OCI-LY7 (cell line): ENCODE measurements at regions of chr4 and their contacts with region 1.

Region 1: DNA sequence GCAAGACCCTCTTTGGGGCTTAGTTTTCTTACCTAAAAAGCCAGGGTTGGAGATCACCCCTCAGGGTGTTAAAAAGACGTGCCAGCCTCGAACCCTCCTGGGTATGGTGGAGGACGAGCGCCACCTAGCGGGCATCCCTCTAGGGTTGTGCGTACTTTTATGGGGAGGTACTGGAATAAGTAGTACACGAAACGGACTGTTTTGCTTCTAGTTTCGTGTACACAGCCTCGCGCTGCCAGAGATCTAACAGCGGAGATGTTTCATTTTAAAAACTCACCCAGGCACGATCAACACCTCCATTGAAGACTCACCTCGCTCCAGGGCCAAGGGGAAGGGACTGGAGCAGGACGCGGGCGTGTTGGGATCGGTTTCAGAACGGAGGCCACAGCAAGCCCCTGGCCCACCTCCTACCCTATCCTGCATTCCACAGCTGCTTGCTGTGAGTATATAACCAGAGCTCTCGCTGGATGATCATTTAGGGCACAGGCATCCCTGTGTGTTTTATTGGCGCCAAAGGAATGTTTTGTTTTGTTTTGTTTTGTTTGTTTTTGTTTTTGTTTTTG is 4.8 kb upstream of the NKX3-2 start:
- DNase-seq: peak; percentile 87
- H3K4me3 ChIP-seq: peak overlapping the region; percentile 59
- H3K27ac ChIP-seq: no peak overlapping the region
- H3K4me1 ChIP-seq: peaks cover 16% of the 10 kb centered on the region
- CTCF ChIP-seq: peak; percentile 94

Region 2: DNA sequence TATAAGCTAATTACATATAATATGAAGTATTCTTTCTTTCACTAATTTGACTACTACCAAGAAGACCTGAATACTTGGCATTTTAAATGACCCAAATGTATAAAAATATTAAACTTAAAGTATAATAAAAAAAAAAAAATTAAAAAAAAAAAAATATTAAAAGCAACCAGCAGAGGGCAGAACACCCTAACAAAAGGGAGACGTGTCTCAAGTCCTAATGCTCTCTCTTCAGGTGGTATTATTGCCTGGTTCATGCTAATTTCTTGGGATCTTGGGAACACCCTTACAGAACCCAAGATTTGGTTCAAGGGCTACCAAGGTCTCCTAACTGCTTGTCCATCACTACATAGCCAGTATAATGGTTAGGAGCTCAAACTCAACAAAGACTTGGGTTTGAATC is 819.7 kb before region 1 on chr4:
- CTCF ChIA-PET with region 1: no interaction called
- POLR2A ChIA-PET with region 1: no interaction called
- intact Hi-C with region 1: loop called (anchors 1 kb)
- DNase-seq: peak; percentile 39
- H3K4me3 ChIP-seq: no peak overlapping the region
- H3K27ac ChIP-seq: no peak overlapping the region
- H3K4me1 ChIP-seq: peaks cover 2% of the 10 kb centered on the region
- CTCF ChIP-seq: peak; percentile 75

Region 3: GRCh38 chr4:12844141-12844540 is 704.9 kb before region 1 on chr4:
- CTCF ChIA-PET with region 1: no interaction called
- POLR2A ChIA-PET with region 1: no interaction called
- intact Hi-C with region 1: loop called (anchors 2 kb)
- DNase-seq: no peak
- H3K4me3 ChIP-seq: no peak overlapping the region
- H3K27ac ChIP-seq: no peak overlapping the region
- H3K4me1 ChIP-seq: no peaks in the 10 kb centered on the region
- CTCF ChIP-seq: no peak

Region 4: GRCh38 chr4:12852338-12853307 is 696.4 kb before region 1 on chr4:
- CTCF ChIA-PET with region 1: no interaction called
- POLR2A ChIA-PET with region 1: no interaction called
- intact Hi-C with region 1: loop called (anchors 1 kb)
- DNase-seq: peak; percentile 44
- H3K4me3 ChIP-seq: no peak overlapping the region
- H3K27ac ChIP-seq: no peak overlapping the region
- H3K4me1 ChIP-seq: no peaks in the 10 kb centered on the region
- CTCF ChIP-seq: peak; percentile 77

Region 5: GRCh38 chr4:13108096-13108495 is 441.0 kb before region 1 on chr4:
- CTCF ChIA-PET with region 1: no interaction called
- POLR2A ChIA-PET with region 1: no interaction called
- intact Hi-C with region 1: loop called (anchors 10 kb)
- DNase-seq: no peak
- H3K4me3 ChIP-seq: no peak overlapping the region
- H3K27ac ChIP-seq: no peak overlapping the region
- H3K4me1 ChIP-seq: no peaks in the 10 kb centered on the region
- CTCF ChIP-seq: no peak

Region 6: DNA sequence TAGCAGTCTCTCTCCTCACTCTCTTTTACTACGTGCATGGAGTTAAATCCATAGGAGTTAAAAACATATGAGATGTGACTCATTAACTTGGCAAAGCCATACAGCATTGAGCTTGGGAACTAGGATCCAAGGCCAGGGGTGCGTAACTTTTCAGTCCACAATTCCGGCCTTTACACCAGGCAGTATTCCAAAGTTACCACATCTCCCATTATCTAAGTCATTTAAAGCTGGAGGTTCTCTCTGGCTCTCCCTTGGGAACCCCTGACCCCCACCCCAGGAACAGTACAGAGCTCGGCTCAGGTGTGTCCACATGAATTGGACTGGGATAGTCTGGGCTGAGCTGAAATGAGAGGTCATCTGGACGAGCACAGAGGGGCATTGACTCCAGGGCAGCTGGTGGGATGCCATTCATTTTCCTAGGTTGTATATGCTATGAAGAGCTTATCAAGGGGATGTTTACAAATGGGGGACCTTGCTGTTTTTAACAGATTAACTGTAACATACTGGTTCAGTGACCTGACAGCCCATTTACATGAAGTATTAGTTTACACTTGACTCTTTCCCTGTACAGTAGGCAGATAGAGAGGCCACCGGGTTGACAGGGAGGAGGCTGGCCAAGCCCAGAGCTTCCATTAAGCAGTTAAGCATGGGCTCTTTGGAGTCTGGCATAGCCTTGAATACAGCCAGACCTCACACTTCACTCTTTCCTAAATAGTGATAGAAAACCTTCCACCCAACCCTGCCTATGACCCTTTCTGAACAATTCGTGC is 193.8 kb before region 1 on chr4:
- CTCF ChIA-PET with region 1: no interaction called
- POLR2A ChIA-PET with region 1: no interaction called
- intact Hi-C with region 1: loop called (anchors 10 kb)
- DNase-seq: no peak
- H3K4me3 ChIP-seq: no peak overlapping the region
- H3K27ac ChIP-seq: no peak overlapping the region
- H3K4me1 ChIP-seq: no peaks in the 10 kb centered on the region
- CTCF ChIP-seq: no peak

Region 7: GRCh38 chr4:13484122-13484748 is 64.8 kb before region 1 on chr4 and contains the start of gene RAB28:
- CTCF ChIA-PET with region 1: no interaction called
- POLR2A ChIA-PET with region 1: no interaction called
- intact Hi-C with region 1: loop called (anchors 2 kb)
- DNase-seq: peak; percentile 94
- H3K4me3 ChIP-seq: peak within 1 kb of the TSS; percentile 95
- H3K27ac ChIP-seq: peak within 1 kb of the TSS; percentile 56
- H3K4me1 ChIP-seq: peaks cover 20% of the 10 kb centered on the region
- CTCF ChIP-seq: no peak
- total RNA-seq, gene RAB28: 30.8 and 59.4 TPM in 2 replicates

Region 8: DNA sequence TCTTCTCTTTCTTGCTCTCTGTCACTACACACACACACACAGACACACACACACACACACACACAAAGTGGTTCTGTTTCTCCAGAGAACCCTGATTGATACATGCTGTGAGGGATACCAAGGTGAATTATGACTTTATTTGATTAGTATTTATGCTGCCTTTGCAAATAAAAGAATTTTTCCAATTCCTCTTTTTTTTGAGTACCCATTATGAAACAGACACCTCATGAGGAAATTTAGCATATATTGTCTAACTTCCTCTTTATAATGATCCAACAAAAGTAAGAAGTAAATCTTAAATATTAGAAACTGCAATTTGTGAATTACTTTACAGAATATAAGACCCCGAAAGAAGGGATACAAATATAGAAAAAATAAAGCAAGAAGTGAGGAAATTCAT is 50.6 kb before region 1 on chr4:
- CTCF ChIA-PET with region 1: no interaction called
- POLR2A ChIA-PET with region 1: no interaction called
- intact Hi-C with region 1: no loop called
- DNase-seq: no peak
- H3K4me3 ChIP-seq: no peak overlapping the region
- H3K27ac ChIP-seq: no peak overlapping the region
- H3K4me1 ChIP-seq: no peaks in the 10 kb centered on the region
- CTCF ChIP-seq: no peak

Region 9: DNA sequence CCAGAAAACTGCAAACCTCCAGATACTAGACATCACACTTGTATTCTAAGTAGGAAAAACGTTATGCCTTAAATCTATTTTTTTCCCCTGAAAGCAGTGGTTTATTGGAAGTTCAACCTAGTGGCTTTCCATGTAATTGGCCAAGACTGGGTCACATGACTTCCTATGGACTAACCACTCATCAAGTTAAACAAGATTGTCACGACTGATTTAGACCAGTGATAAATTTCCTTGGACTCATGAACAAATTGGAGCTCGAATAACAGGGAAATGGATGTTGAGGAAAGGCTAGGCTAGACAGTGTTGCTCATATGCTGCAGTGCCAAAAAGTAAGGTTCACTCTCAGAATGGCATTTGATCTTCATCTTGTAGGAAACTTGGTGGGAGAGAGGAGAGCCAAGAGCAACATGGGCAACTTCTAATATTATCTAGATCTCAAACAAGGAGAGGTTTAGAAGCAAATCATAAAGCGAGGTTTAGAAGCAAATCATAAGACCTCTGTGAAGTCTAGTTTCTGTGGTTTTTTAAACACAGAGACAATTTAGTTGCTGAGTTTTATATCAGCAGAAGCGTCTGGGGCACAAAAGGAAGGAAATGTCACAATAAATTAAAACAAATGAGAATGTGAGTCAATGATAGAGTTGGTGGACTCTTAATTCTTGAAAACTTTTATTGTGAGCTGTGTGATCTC is 244.1 kb after region 1 on chr4:
- CTCF ChIA-PET with region 1: no interaction called
- POLR2A ChIA-PET with region 1: no interaction called
- intact Hi-C with region 1: no loop called
- DNase-seq: no peak
- H3K4me3 ChIP-seq: no peak overlapping the region
- H3K27ac ChIP-seq: no peak overlapping the region
- H3K4me1 ChIP-seq: no peaks in the 10 kb centered on the region
- CTCF ChIP-seq: no peak